Left cardiac atrium (tissue), 4 donors: ENCODE measurements at regions of chr2 and their contacts with region 1.

Region 1: GRCh38 chr2:168635065-168635577 is 167.3 kb upstream of the NOSTRIN start:
- DNase-seq: peak; percentile 46
- ATAC-seq: peak; percentile 33 to 41

Region 2: GRCh38 chr2:168521053-168521741 is 113.9 kb before region 1 on chr2:
- intact Hi-C with region 1: loop called (anchors 10 kb)
- DNase-seq: no peak
- ATAC-seq: peak in 1 of 2 donors; percentile 59